Sigmoid colon (tissue), 7 donors: ENCODE measurements at regions of chr4 and their contacts with region 1.

Region 1: GRCh38 chr4:176034499-176034898 is 31.1 kb upstream of the WDR17 start:
- DNase-seq: no peak
- H3K4me3 ChIP-seq: no peak overlapping the region
- H3K27ac ChIP-seq: no peak overlapping the region
- H3K4me1 ChIP-seq: peaks cover 0 to 4% (median 0%) of the 10 kb centered on the region in 4 donors
- H3K27me3 ChIP-seq: no peaks in the 10 kb centered on the region
- CTCF ChIP-seq: peak in 2 of 4 experiments; percentile 17 to 48
- EP300 ChIP-seq: no peak
- POLR2A ChIP-seq: no peak

Region 2: GRCh38 chr4:176150356-176150682 is 115.8 kb after region 1 on chr4:
- intact Hi-C with region 1: loop called (anchors 10 kb)
- DNase-seq: no peak
- H3K4me3 ChIP-seq: no peak overlapping the region
- H3K27ac ChIP-seq: peak overlapping the region in 2 of 4 donors; percentile 34 to 60
- H3K4me1 ChIP-seq: peaks cover 0 to 27% (median 8%) of the 10 kb centered on the region in 4 donors
- H3K27me3 ChIP-seq: no peaks in the 10 kb centered on the region
- CTCF ChIP-seq: peak in 2 of 4 experiments; percentile 14 to 47
- EP300 ChIP-seq: no peak
- POLR2A ChIP-seq: no peak

Region 3: GRCh38 chr4:176198316-176198903 is 163.9 kb after region 1 on chr4:
- intact Hi-C with region 1: no loop called
- DNase-seq: peak; percentile 30
- H3K4me3 ChIP-seq: no peak overlapping the region
- H3K27ac ChIP-seq: no peak overlapping the region
- H3K4me1 ChIP-seq: peaks cover 0 to 10% (median 6%) of the 10 kb centered on the region in 4 donors
- H3K27me3 ChIP-seq: no peaks in the 10 kb centered on the region
- CTCF ChIP-seq: no peak
- EP300 ChIP-seq: no peak
- POLR2A ChIP-seq: no peak

Region 4: DNA sequence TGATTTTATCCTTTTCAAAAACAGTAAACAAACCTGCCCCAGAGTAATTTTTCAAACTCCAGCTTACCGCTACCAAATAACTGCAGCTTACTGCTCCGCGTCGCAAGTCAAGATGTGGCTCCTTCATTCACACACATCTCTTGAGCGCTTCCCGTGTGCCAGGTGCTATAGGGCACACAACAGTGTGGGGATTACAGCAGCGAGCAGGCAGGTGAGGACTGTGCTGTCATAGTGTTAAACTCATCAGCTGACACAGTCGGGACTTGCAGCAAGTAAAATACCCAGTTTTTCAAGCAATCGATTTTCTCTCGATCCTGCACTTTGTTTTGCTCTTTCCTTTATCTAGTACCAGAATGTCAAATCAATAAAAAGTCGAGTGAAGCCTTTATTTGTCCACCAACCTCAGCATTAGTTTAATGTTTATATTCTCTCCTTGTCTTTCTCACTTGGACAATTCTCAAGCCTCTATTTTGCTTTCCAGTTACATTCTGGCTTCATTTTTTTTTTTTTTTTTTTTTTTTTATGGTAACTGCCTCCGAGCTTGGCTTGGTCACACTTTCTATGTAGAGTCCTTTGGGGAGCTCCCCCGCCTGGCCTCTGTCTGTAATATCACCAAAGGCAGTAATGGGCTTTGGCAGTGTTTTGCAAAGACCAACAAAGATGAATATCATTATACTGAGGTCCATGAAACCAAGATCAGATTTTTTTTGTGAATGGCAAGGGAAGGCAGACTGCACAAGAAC is 242.8 kb after region 1 on chr4:
- intact Hi-C with region 1: loop called (anchors 10 kb)
- DNase-seq: peak; percentile 86
- H3K4me3 ChIP-seq: peak overlapping the region; percentile 1 to 28 (median 24)
- H3K27ac ChIP-seq: peak overlapping the region; percentile 8 to 74 (median 70)
- H3K4me1 ChIP-seq: peaks cover 0 to 24% (median 18%) of the 10 kb centered on the region in 4 donors
- H3K27me3 ChIP-seq: no peaks in the 10 kb centered on the region
- CTCF ChIP-seq: peak in 3 of 4 experiments; percentile 25 to 46 (median 30)
- EP300 ChIP-seq: no peak
- POLR2A ChIP-seq: no peak

Region 5: DNA sequence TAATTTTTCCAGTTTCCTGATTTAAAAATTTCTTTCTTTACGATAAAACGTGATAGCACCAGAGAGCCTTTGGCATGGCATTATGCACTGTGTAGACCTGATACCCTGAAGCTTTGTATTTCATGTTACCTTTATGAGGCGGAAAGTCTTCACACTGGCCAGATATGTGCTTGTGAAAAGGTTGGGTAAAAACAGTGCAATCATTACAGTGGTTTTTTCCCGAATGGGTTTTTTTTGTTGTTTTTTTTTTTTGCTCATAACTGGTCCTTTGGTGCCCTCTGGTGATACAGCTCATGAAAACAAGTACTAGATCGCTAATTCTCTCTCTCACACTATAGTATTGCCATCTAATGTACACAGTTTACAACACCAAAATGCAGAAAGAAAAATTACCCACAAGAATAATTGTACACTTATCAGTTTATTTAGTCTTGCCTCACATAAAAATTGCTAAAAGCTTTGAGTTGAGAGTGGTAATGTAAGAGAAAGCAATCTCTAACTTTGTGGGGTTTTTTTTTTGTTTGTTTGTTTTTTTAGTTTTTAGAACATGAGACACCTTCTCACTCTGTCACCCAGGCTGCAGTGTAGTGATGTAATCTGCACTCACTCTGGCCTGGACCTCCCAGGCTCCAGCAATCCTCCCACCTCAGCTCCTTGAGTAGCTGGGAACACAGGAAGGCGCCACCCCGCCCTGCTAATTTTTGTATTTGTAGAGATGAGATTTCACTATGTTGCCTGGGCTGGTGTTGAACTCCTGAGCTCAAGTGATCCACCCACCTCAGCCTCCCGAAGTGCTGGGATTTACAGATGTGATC is 306.6 kb after region 1 on chr4:
- intact Hi-C with region 1: loop called (anchors 1 kb)
- DNase-seq: no peak
- H3K4me3 ChIP-seq: peak overlapping the region in 2 of 4 donors; percentile 14 to 20
- H3K27ac ChIP-seq: no peak overlapping the region
- H3K4me1 ChIP-seq: peaks cover 0 to 33% (median 11%) of the 10 kb centered on the region in 4 donors
- H3K27me3 ChIP-seq: no peaks in the 10 kb centered on the region
- CTCF ChIP-seq: peak in 3 of 4 experiments; percentile 22 to 54 (median 42)
- EP300 ChIP-seq: no peak
- POLR2A ChIP-seq: no peak

Region 6: DNA sequence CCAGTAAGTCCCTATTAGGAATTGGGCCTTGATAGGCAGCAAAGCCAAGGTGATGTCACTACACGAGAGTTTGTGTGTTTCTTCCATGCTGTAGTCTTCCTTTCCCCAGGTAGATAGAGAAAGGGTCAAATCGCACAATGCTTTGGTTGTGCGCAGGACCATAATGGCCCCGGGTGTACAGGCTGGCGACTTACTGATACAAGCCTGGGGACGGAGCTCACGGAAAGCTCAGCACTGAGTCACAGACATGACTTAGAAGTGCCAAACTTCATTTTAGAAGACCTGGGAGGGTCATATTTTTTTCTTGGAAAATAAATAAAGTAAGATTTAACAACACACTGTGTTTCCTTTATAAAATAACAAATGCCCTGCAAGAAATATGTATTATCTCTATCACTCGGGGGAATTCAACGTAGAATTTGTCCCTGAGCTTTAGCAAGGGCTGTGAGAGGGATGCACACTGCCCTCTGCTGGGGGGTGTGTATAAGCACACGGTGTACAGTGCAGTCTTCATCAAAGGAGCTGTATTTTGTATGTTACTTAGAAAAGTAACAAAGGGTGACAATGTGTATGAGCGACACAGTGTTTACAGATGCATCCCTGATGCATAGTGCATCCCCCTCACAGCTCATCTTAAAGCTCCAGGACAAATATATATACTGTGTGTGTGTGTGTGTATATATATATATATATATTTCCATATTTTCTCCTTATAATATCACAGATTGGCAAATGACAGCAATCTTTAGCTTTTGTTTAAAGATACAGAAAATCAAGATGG is 1012.8 kb after region 1 on chr4:
- intact Hi-C with region 1: loop called (anchors 10 kb)
- DNase-seq: peak; percentile 67
- H3K4me3 ChIP-seq: no peak overlapping the region
- H3K27ac ChIP-seq: no peak overlapping the region
- H3K4me1 ChIP-seq: no peaks in the 10 kb centered on the region
- H3K27me3 ChIP-seq: no peaks in the 10 kb centered on the region
- CTCF ChIP-seq: peak in 3 of 4 experiments; percentile 28 to 73 (median 50)
- EP300 ChIP-seq: no peak
- POLR2A ChIP-seq: no peak